B cell (primary cell): ENCODE measurements at regions of chr2 and their contacts with region 1.

Region 1: DNA sequence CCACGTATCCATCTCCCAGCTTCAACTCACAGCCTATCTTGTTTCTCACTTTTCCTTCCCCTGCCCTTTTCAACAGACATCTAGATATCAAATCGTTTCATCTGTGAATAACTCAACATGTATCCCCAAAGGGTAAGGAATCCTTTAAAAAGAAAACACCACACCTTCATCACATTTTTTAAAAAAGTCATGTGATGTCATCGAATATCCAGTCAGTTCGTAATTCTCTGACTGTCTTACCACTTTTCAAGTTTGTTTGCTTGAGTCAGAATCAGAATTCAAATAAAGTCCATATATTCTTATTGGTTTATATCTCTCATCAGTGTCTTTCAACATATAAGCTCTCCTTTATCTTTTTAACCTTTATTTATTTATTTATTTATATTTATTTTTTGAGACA is 5.4 kb upstream of the LONRF2 start:
- DNase-seq: no peak
- ATAC-seq: no peak
- H3K4me3 ChIP-seq: no peak overlapping the region
- H3K4me3 Mint-ChIP-seq: no peak overlapping the region
- H3K27ac ChIP-seq: no peak overlapping the region
- H3K27ac Mint-ChIP-seq: no peak overlapping the region
- H3K4me1 ChIP-seq: peaks cover 0 to under 1% of the 10 kb centered on the region in 2 donors
- H3K4me1 Mint-ChIP-seq: no peaks in the 10 kb centered on the region
- H3K27me3 ChIP-seq: peaks cover 0 to 31% (median 16%) of the 10 kb centered on the region in 4 experiments
- H3K27me3 Mint-ChIP-seq: peaks cover 59% of the 10 kb centered on the region
- CTCF ChIP-seq: no peak

Region 2: DNA sequence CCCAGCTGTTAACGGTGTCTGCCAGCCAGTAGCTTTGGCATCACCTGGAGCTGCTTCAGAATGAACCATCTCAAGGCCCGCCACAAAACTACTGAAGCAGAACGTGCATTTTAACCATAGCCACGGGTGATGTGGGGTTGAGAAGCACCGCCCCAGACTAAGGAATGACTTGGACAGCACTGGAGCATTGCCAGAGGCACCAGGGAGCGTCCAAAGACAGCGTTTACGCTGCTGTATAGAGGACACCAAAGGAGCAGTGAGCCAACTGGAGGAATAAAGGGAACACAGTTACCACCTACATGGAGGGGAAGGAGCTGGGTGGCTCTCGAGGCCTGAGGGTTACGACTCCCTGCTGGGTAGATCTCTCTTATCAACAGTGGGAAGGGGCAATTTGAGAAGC is 23.0 kb after region 1 on chr2:
- CTCF ChIA-PET with region 1: no interaction called
- POLR2A ChIA-PET with region 1: no interaction called
- intact Hi-C with region 1: loop called (anchors 1 kb)
- DNase-seq: no peak
- ATAC-seq: no peak
- H3K4me3 ChIP-seq: no peak overlapping the region
- H3K4me3 Mint-ChIP-seq: no peak overlapping the region
- H3K27ac ChIP-seq: no peak overlapping the region
- H3K27ac Mint-ChIP-seq: no peak overlapping the region
- H3K4me1 ChIP-seq: no peaks in the 10 kb centered on the region
- H3K4me1 Mint-ChIP-seq: no peaks in the 10 kb centered on the region
- H3K27me3 ChIP-seq: peaks cover 0 to 14% (median 10%) of the 10 kb centered on the region in 4 experiments
- H3K27me3 Mint-ChIP-seq: peaks cover 64% of the 10 kb centered on the region
- CTCF ChIP-seq: no peak

Region 3: GRCh38 chr2:101860157-101860556 is 1532.4 kb after region 1 on chr2:
- CTCF ChIA-PET with region 1: no interaction called
- POLR2A ChIA-PET with region 1: no interaction called
- intact Hi-C with region 1: no loop called
- DNase-seq: no peak
- ATAC-seq: no peak
- H3K4me3 ChIP-seq: no peak overlapping the region
- H3K4me3 Mint-ChIP-seq: no peak overlapping the region
- H3K27ac ChIP-seq: no peak overlapping the region
- H3K27ac Mint-ChIP-seq: peak overlapping the region; percentile 38
- H3K4me1 ChIP-seq: no peaks in the 10 kb centered on the region
- H3K4me1 Mint-ChIP-seq: no peaks in the 10 kb centered on the region
- H3K27me3 ChIP-seq: no peaks in the 10 kb centered on the region
- H3K27me3 Mint-ChIP-seq: no peaks in the 10 kb centered on the region
- CTCF ChIP-seq: no peak